ENCODE measurements at regions of chr5 and their contacts with region 1.

Region 1: DNA sequence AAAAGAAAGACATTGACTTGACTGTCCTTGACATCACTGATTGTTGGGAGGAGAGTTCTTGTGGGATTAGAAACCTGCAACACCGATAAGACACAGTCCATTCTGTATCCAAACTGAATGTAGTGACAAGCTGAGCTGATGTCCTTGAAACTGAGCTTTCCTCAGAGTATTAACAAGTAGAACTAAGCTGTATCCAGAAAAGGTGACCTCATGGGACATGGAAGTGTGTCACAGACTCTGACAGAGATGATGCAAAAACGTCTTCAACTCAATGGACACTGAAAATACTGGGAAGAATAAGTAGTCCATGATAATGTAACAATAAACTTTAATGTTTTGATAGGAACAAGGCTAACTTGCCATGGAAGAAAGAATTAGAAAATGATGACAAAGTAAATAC is 690.1 kb downstream of the CDH18 start:
- DNase-seq: no peak
- ATAC-seq: no peak
- H3K4me3 ChIP-seq: no peak overlapping the region
- H3K27ac ChIP-seq: no peak overlapping the region
- H3K4me1 ChIP-seq: no peaks in the 10 kb centered on the region
- H3K27me3 ChIP-seq: no peaks in the 10 kb centered on the region
- CTCF ChIP-seq: no peak

Region 2: DNA sequence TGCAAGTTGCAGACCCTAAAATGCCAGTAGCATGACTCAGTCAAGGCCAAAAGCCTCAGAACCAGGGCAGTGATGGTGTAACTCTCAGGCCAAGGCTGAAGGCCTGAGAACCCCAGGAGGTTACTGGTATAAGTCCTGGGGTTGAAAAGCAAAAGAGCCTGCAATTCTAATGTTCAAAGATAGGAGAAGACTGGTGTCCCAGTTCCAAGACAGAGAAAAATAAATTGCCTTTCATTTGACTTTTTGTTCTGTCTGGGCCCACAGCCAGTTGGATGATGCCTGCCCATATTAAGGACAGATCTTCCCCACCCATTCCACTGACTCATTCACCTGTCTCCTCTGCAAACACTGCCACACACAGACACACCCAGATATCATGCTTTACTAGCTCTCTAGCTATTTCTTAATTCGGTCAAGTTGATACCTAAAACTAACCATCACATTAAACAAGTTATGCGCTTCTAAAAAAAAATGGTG is 17.0 kb after region 1 on chr5:
- CTCF ChIA-PET with region 1: no interaction called
- POLR2A ChIA-PET with region 1: interaction called, 10 read pairs
- in situ Hi-C with region 1: no loop called
- intact Hi-C with region 1: no loop called
- DNase-seq: no peak
- ATAC-seq: no peak
- H3K4me3 ChIP-seq: no peak overlapping the region
- H3K27ac ChIP-seq: no peak overlapping the region
- H3K4me1 ChIP-seq: no peaks in the 10 kb centered on the region
- H3K27me3 ChIP-seq: no peaks in the 10 kb centered on the region
- CTCF ChIP-seq: no peak

Region 3: DNA sequence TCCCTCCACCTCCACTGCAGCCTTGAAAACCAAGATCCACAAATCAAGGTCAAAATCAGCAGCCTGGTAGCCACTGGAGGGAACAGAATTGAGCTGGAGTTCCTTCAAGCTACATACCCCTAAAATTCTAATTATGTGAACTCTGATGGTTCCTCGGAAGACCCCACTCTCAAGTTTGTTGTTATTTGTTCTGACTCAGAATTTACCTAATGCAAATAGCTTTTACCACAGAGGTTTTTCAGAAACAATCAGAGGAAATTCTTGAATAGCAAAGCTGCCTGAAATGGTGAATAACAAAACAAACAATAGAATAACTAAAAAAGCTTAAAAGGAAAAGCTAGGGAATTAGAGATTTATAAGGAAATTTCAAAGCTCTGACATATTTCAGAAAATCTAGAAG is 470.1 kb after region 1 on chr5:
- CTCF ChIA-PET with region 1: interaction called, 12 read pairs
- POLR2A ChIA-PET with region 1: no interaction called
- in situ Hi-C with region 1: no loop called
- intact Hi-C with region 1: no loop called
- DNase-seq: no peak
- ATAC-seq: no peak
- H3K4me3 ChIP-seq: no peak overlapping the region
- H3K27ac ChIP-seq: no peak overlapping the region
- H3K4me1 ChIP-seq: no peaks in the 10 kb centered on the region; the same call in 1 of the 2 replicates
- H3K27me3 ChIP-seq: no peaks in the 10 kb centered on the region
- CTCF ChIP-seq: no peak

Region 4: DNA sequence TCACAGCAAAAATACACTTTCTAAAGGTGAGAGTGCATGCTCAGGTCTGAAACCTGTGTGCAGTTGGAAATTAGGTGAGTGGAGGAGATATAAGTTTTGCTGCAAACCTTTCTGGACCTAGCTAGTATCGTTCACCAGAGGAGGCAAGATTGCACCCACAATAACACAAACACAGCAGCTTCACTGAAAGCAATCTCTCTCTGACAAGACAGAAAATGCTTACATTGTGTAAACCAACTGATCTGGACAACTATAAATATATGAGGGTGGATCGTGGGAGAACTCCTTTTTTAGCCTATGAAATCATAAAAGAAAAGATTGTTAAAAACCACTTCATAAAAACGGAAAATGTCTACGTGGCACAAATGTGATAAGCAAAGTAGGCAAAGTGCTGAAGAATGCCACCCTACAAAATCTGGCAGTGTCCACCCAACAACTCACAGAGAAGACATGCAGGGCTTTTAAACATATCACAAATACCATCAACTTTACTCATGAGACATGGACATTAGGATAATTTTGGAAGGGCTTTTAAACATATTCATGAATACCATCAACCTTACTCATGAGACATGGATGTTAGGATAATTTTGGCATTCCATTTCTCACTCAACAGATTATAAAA is 555.8 kb after region 1 on chr5:
- CTCF ChIA-PET with region 1: no interaction called
- POLR2A ChIA-PET with region 1: no interaction called
- in situ Hi-C with region 1: no loop called
- intact Hi-C with region 1: no loop called
- DNase-seq: peak; percentile 13
- ATAC-seq: no peak; the same call in 1 of the 2 replicates
- H3K4me3 ChIP-seq: no peak overlapping the region
- H3K27ac ChIP-seq: no peak overlapping the region
- H3K4me1 ChIP-seq: no peaks in the 10 kb centered on the region
- H3K27me3 ChIP-seq: no peaks in the 10 kb centered on the region
- CTCF ChIP-seq: no peak

Region 5: GRCh38 chr5:20241351-20241750 is 943.4 kb after region 1 on chr5:
- CTCF ChIA-PET with region 1: no interaction called
- POLR2A ChIA-PET with region 1: no interaction called
- in situ Hi-C with region 1: no loop called
- intact Hi-C with region 1: no loop called
- DNase-seq: no peak
- ATAC-seq: no peak
- H3K4me3 ChIP-seq: no peak overlapping the region
- H3K27ac ChIP-seq: no peak overlapping the region; the same call in 1 of the 2 replicates
- H3K4me1 ChIP-seq: no peaks in the 10 kb centered on the region; the same call in 1 of the 2 replicates
- H3K27me3 ChIP-seq: no peaks in the 10 kb centered on the region
- CTCF ChIP-seq: no peak

Measured in Panc1 (cell line).